AG04450 (cell line): ENCODE measurements at regions of chr5 and their contacts with region 1.

Region 1: GRCh38 chr5:17216176-17216973 is 1.1 kb upstream of the BASP1 start:
- DNase-seq: no peak
- H3K4me3 ChIP-seq: peak overlapping the region; percentile 66
- H3K27ac ChIP-seq: no peak overlapping the region
- H3K27me3 ChIP-seq: no peaks in the 10 kb centered on the region
- CTCF ChIP-seq: peak; percentile 89

Region 2: DNA sequence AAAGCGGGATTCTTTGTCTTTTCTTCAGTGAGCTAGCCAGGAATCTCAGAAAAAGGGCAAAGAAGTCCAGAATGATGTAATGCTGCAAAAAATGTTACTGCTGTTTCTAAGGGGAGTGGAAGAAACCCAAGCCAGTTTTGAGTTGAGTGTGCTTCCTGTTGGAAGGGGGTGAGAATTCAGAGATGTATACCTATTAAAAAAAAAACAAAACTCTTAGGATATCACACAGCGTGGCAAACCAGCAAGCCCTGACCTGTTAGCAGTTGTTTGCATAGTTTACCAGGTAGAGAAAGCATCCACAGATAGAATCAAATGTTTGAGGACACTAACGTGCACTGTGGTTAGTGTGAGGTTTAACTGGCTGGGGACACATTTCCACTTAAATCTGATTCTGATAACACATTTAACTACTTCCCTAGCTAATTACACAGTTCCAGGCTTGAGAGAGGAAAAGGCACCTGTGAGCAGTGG is 12.5 kb after region 1 on chr5:
- CTCF ChIA-PET with region 1: interaction called, 18 read pairs
- POLR2A ChIA-PET with region 1: interaction called, 4 read pairs
- DNase-seq: no peak
- H3K4me3 ChIP-seq: no peak overlapping the region
- H3K27ac ChIP-seq: peak overlapping the region; percentile 70
- H3K27me3 ChIP-seq: no peaks in the 10 kb centered on the region
- CTCF ChIP-seq: no peak

Region 3: GRCh38 chr5:17305964-17306716 is 89.8 kb after region 1 on chr5:
- CTCF ChIA-PET with region 1: interaction called, 17 read pairs
- POLR2A ChIA-PET with region 1: no interaction called
- DNase-seq: no peak
- H3K4me3 ChIP-seq: no peak overlapping the region
- H3K27ac ChIP-seq: peak overlapping the region; percentile 59
- H3K27me3 ChIP-seq: no peaks in the 10 kb centered on the region
- CTCF ChIP-seq: no peak

Region 4: DNA sequence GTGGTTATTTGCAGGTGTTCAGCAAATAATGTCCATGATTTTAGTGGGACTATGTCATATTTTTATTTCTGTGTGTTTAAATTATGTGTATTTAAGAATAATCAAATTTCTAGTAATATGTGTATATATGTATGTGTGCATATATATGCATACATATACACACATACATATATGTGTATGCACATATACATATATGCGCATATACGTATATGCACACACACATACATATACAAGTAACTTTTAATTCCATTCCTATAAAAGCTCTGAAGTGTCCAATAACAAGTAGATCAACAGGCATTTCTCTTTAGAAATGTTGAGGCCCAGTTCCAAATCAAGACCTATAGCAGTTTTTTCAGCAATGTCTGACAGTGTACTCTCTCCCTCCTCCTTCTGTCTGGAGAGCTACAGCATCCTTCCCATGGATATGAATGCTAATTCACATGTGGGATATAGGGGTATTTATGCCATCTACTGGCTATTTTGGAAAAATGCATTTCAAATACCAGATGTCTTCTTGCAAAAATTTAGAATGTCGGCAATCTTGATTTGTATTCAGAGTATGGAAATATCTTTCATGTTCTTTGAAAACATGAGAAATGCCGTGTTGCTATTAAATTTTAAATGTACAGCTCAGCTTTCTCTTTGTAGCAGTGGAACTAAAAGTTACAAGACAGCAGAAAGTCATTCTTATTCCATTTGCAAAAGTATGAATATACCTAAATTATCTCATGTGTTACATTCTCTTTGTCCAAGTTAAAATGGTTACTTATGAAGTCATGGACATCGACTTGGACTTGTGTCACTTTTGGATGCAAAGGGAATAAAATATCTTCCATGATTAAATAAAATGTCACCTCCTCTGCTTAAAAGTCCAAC is 1065.5 kb after region 1 on chr5:
- CTCF ChIA-PET with region 1: interaction called, 93 read pairs
- POLR2A ChIA-PET with region 1: no interaction called
- DNase-seq: peak; percentile 33
- H3K4me3 ChIP-seq: no peak overlapping the region
- H3K27ac ChIP-seq: no peak overlapping the region
- H3K27me3 ChIP-seq: no peaks in the 10 kb centered on the region
- CTCF ChIP-seq: peak; percentile 62

Region 5: GRCh38 chr5:18314192-18314778 is 1097.9 kb after region 1 on chr5:
- CTCF ChIA-PET with region 1: interaction called, 38 read pairs
- POLR2A ChIA-PET with region 1: no interaction called
- DNase-seq: no peak
- H3K4me3 ChIP-seq: no peak overlapping the region
- H3K27ac ChIP-seq: no peak overlapping the region
- H3K27me3 ChIP-seq: no peaks in the 10 kb centered on the region
- CTCF ChIP-seq: peak; percentile 49